Ovary (tissue), 10 donors: ENCODE measurements at regions of chr7 and their contacts with region 1.

Region 1: DNA sequence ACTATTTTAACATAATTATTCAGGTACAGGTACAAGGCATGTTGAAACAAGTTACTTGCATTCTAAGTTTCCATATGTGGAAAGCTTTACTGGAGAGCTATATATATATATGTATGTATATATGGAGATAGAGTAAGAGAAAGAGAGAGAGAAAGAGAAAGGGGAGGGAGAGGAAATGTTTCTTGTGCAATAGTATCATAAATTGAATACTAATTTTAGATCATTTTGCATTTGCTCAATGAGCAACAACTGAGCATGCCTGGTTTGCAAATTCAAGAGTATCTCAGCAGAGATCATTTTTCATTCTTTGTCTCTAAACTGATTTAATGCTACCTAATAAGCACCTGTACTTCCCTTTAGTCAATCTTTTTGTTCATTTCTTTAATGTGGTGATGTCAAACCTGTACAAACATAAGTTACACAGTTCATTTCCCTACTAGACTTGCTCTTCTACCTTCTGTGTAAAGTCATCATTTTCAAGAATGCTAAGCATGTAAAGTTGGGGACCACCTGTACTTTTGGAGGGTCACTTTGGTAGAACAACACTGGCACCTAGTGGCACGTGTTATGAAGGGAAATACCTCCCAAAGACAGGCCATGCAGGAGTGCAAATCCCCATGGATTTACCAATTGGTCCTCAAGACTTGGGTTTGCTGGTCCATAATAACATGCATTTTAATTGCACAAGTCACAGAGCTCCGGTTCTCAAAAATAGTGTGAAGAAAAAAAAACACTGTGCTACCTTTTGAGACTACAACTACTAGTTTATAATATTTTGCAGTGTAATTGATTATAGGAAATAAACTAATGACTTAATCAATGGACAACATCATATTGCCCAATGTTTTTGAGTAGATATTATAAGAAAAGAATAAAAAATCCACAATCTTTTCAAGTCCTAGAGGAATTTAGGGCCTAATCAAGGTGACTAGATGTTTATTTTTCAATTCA is 431.2 kb upstream of the IGFBP3 start:
- DNase-seq: peak in 2 of 5 donors; percentile 21 to 33
- H3K4me3 ChIP-seq: no peak overlapping the region
- H3K27ac ChIP-seq: no peak overlapping the region
- H3K4me1 ChIP-seq: peaks cover 1% of the 10 kb centered on the region
- H3K27me3 ChIP-seq: no peaks in the 10 kb centered on the region
- CTCF ChIP-seq: peak in 1 of 3 donors; percentile 33
- EP300 ChIP-seq: no peak
- POLR2A ChIP-seq: no peak

Region 2: GRCh38 chr7:45923290-45923689 is 429.0 kb before region 1 on chr7:
- intact Hi-C with region 1: loop called in 2 of 4 experiments (anchors 5 to 10 kb)
- DNase-seq: peak; percentile 66 to 83 (median 81)
- H3K4me3 ChIP-seq: no peak overlapping the region
- H3K27ac ChIP-seq: no peak overlapping the region
- H3K4me1 ChIP-seq: peaks cover 4% of the 10 kb centered on the region
- H3K27me3 ChIP-seq: no peaks in the 10 kb centered on the region
- CTCF ChIP-seq: peak; percentile 53 to 80 (median 76)
- EP300 ChIP-seq: no peak
- POLR2A ChIP-seq: no peak

Region 3: GRCh38 chr7:46569133-46569465 is 216.8 kb after region 1 on chr7:
- intact Hi-C with region 1: loop called in 1 of 4 experiments (anchors 5 kb)
- DNase-seq: no peak
- H3K4me3 ChIP-seq: no peak overlapping the region
- H3K27ac ChIP-seq: no peak overlapping the region
- H3K4me1 ChIP-seq: no peaks in the 10 kb centered on the region
- H3K27me3 ChIP-seq: no peaks in the 10 kb centered on the region
- CTCF ChIP-seq: no peak
- EP300 ChIP-seq: no peak
- POLR2A ChIP-seq: no peak